Activated CD4-positive, alpha-beta T cell treated with anti-CD3 and anti-CD28 coated beads, Interleukin-2, amount 10 ng/mL, durations not matched to agents 24 days and 14 days (primary cell): ENCODE measurements at regions of chr10 and their contacts with region 1.

Region 1: GRCh38 chr10:123154092-123154921 is at the start of gene BUB3:
- DNase-seq: peak; percentile 98
- H3K4me3 Mint-ChIP-seq: peak within 1 kb of the TSS; percentile 95
- H3K27ac Mint-ChIP-seq: peak within 1 kb of the TSS; percentile 100
- H3K4me1 Mint-ChIP-seq: peaks cover 54% of the 10 kb centered on the region
- H3K27me3 Mint-ChIP-seq: peaks cover 18% of the 10 kb centered on the region
- total RNA-seq, gene BUB3: 186 and 193 TPM in 2 replicates

Region 2: DNA sequence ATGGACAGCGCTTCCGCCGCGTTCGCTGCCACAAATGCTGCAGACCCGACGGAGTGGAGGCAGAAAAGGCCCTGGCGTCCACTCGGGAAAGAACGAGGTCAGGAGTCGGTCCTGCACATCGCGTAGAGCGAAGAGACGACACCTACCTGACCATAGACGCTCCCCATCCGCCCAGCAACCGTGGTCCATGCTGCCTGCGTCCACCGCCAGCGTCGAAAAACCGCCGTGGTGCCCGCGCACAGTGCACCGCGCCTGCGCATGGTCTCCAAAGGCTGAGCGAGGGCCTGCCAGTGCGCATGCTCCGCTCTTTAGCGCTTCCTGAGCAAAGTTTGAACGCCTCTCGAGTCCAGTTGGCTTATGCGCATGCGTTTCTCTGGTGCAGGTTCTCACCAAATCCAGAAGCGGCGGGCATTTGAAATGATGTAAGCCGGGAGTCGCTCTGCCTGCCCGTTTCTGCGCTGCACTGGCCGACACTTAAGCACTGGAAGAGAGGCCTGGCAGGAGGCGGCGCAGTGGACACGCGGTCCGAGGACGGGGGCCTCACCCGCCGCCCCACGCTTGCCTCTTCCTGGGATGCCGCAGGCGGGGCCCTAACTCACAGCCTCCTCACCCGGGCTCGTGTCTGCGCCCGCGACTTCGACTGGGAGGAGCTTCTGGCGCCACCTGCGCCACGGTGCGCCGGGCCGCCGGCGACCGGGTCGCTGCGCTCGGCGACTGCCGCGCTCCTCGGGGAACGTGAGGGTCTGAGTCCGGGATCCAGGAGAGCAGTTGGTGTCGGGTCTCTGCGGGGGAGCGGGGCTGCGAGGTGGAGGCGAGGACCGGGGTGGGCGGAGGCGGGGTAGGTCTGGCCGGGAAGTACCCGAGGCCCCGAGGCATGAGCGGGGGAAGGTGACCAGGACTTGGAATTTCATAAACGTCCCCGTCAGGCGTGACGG is 274.7 kb before region 1 on chr10 and contains the start of gene FAM24B:
- intact Hi-C with region 1: loop called (anchors 1 kb)
- DNase-seq: peak; percentile 98
- H3K4me3 Mint-ChIP-seq: peak within 1 kb of the TSS; percentile 98
- H3K27ac Mint-ChIP-seq: peak within 1 kb of the TSS; percentile 96
- H3K4me1 Mint-ChIP-seq: peaks cover 38% of the 10 kb centered on the region
- H3K27me3 Mint-ChIP-seq: no peaks in the 10 kb centered on the region
- total RNA-seq, gene FAM24B: 14.2 and 15.2 TPM in 2 replicates

Region 3: DNA sequence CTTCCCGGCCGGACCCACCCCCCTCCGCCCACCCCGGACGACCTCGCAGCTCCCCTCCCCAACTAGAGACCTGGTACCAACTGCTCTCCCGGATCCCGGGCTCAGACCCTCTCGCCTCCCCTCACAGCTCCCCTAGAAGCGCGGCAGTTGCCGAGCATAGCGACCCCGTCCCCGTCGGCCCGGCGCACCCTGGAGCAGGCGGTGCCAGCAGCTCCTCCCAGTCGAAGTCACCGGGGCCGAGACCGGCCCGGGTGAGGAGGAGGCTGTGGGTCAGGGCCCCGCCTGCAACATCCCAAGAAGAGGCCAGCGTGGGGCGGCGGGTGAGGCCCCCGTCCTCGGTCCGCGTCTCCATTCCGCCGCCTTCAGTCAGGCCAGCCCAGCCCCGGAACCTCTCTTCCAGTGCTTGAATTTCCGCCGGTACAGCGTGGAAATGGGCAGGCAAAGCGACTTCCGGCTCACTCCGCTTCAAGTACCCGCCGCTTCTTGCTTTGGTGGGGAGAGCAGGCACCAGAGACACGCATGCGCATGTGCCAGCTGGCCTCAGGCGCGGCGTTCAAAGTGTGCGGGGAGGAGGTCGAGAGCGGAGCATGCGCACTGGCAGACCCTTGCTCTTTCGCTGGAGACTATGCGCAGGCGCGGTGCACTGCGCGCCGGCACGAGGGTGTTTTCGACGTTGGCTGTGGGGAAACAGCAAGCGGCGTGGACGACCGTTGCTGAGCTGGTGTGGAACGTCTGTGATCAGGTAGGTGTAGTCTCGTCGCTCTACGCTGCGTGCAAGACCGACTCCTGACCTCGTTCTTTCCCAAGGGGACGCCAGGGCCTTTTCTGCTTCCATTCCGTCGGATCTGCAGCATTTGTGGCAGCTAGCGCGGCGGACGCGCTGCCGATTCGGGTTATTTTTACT is 200.2 kb before region 1 on chr10 and contains the start of gene C10orf88:
- intact Hi-C with region 1: loop called (anchors 1 kb)
- DNase-seq: peak; percentile 99
- H3K4me3 Mint-ChIP-seq: peak within 1 kb of the TSS; percentile 91
- H3K27ac Mint-ChIP-seq: peak within 1 kb of the TSS; percentile 92
- H3K4me1 Mint-ChIP-seq: peaks cover 22% of the 10 kb centered on the region
- H3K27me3 Mint-ChIP-seq: peaks cover 15% of the 10 kb centered on the region
- total RNA-seq, gene C10orf88: 13.9 and 15.7 TPM in 2 replicates

Region 4: DNA sequence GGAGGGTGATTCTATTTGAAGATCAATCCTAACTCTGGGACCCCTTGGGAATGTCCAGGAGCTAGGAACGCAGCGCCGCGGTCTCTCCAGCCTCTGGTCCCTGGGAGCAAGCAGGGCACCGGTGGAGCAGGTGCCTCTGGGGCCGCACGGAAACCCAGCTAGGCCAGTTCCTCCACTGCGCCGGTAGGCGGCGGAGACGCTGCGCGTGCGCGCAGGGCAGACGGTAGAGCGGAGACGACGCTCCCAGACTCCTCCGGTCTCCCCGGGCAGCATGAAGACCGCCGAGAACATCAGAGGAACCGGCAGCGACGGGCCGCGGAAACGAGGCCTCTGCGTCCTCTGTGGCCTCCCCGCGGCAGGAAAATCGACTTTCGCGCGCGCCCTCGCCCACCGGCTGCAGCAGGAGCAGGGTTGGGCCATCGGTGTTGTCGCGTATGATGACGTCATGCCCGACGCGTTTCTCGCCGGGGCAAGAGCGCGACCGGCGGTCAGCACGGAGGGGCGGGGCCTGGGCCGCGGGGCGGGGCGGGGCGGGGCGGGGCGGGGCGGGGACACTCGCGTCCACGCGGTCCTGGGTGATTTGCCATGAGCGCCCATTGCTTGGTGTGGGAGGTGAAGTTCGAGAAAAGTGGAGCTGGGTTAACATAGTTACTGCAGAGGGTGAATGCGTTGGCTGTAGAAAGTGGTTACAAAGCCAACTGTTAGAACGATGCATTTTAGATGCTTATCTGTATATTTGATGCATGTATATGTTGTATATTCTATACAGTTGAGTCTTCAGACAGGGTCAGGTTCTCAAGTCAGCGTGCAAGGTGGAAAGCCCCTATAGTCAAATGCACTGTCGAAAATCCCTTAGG is 173.9 kb before region 1 on chr10 and contains the start of gene PSTK:
- intact Hi-C with region 1: loop called (anchors 1 kb)
- DNase-seq: peak; percentile 96
- H3K4me3 Mint-ChIP-seq: peak within 1 kb of the TSS; percentile 91
- H3K27ac Mint-ChIP-seq: peak within 1 kb of the TSS; percentile 98
- H3K4me1 Mint-ChIP-seq: peaks cover 16% of the 10 kb centered on the region
- H3K27me3 Mint-ChIP-seq: peaks cover 10% of the 10 kb centered on the region
- total RNA-seq, gene PSTK: 4.5 and 4.8 TPM in 2 replicates

Region 5: DNA sequence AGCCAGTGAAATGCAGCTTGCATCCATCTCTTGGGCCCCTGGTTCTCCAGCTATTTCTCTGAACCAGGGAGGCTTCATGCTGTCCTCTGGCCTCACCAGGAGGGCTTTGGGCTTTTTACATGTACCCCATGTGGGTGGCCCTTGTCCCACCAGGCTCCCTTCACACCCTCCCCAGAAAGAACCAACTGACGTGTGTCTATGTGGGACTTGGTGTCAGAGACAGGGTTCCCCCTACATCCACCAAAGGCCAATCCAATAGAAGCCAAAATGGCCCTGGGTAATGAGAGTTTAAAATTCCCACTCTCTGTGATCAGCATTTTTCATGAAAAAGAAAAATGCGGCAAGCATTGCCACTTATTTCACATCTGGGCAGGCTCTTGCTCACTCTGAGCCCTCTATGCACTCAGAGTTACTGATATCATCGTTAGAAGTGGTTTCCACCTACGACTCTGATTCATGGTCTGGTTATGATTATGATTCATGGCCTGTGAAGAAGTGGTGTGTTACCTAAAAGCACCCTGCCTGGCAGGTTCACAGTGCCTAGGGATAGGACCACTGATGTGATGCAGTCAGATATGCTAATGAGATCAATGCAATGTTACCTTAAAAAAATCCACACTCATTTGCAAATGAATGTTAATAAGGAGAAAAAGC is 133.4 kb after region 1 on chr10:
- intact Hi-C with region 1: loop called (anchors 1 kb)
- DNase-seq: peak; percentile 59
- H3K4me3 Mint-ChIP-seq: no peak overlapping the region
- H3K27ac Mint-ChIP-seq: no peak overlapping the region
- H3K4me1 Mint-ChIP-seq: peaks cover 6% of the 10 kb centered on the region
- H3K27me3 Mint-ChIP-seq: peaks cover 6% of the 10 kb centered on the region

Region 6: GRCh38 chr10:123945325-123945920 is 791.1 kb after region 1 on chr10:
- intact Hi-C with region 1: no loop called
- DNase-seq: no peak
- H3K4me3 Mint-ChIP-seq: no peak overlapping the region
- H3K27ac Mint-ChIP-seq: no peak overlapping the region
- H3K4me1 Mint-ChIP-seq: no peaks in the 10 kb centered on the region
- H3K27me3 Mint-ChIP-seq: no peaks in the 10 kb centered on the region

Region 7: DNA sequence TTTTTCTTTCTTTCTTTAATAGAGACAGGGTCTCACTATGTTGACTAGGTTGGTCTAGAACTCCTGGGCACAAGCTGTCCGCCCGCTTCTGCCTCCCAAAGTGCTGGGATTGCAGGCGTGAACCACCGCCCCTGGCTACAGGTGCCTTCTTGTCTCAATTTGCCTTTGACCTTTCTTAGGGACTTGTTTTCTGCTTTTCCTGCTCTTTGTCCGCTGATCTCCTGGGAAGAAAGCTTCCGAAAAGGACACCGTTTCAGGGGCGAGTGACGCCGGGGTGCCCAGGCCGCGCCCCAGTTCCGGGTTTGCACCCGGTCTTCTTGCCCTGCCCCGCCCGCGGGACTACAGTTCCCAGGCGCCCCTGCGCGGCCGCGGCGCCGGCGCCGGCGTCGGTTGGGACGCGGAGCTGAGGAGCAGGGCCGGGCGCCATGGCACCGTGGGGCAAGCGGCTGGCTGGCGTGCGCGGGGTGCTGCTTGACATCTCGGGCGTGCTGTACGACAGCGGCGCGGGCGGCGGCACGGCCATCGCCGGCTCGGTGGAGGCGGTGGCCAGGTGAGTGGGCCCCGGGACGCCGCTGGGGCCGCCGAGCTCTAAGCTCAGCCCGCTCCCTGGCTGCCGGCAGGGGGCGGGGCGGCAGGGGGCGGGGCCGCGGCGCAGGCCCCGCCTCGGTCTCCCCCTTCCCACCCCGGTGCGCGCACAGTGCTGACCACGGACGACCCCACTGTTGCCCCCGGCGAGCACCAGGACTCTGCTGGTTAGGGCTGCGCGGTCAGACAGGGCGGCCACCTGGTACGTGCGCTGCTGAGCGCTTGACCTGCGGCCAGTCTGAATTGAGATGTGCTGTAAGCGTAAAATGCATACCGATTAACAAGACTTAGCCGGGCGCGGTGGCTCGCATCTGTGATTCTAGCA is 1307.4 kb after region 1 on chr10 and contains the start of gene LHPP:
- intact Hi-C with region 1: loop called (anchors 5 kb)
- DNase-seq: peak; percentile 97
- H3K4me3 Mint-ChIP-seq: peak within 1 kb of the TSS; percentile 77
- H3K27ac Mint-ChIP-seq: peak within 1 kb of the TSS; percentile 92
- H3K4me1 Mint-ChIP-seq: peaks cover 24% of the 10 kb centered on the region
- H3K27me3 Mint-ChIP-seq: peaks cover 11% of the 10 kb centered on the region
- total RNA-seq, gene LHPP: 8.1 and 8.6 TPM in 2 replicates